ENCODE measurements at regions of chr5 and their contacts with region 1.

Region 1: GRCh38 chr5:127536687-127537086 is 19.2 kb downstream of the PRRC1 start:
- DNase-seq: no peak
- ATAC-seq: no peak
- H3K4me3 ChIP-seq: no peak overlapping the region
- H3K4me3 Mint-ChIP-seq: no peak overlapping the region
- H3K27ac ChIP-seq: no peak overlapping the region
- H3K27ac Mint-ChIP-seq: no peak overlapping the region
- H3K4me1 ChIP-seq: no peaks in the 10 kb centered on the region
- H3K4me1 Mint-ChIP-seq: peaks cover 8% of the 10 kb centered on the region
- H3K27me3 ChIP-seq: no peaks in the 10 kb centered on the region
- H3K27me3 Mint-ChIP-seq: no peaks in the 10 kb centered on the region
- CTCF ChIP-seq: peak; percentile 55

Region 2: DNA sequence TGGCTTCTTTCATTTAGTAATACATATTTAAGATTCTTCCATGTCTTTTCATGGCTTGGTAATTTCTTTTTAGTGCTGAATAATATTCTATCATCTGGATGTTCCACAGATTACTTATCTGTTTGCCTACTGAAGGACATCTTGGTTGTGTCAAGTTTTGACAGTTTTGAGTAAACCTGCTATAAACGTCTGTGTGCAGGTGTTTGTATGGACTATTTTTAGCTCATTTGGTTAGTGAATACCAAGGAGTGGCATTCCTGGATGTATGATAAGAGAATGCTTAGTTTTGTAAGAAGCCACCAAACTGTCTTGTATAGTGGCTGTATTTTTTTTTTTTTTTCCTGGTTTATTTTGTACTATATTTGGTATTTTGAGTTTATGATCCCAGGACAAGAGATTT is 19.1 kb after region 1 on chr5:
- CTCF ChIA-PET with region 1: interaction called, 4 read pairs
- POLR2A ChIA-PET with region 1: interaction called, 3 read pairs
- intact Hi-C with region 1: loop called in 1 of 2 experiments (anchors 1 kb)
- DNase-seq: no peak
- ATAC-seq: no peak
- H3K4me3 ChIP-seq: no peak overlapping the region
- H3K4me3 Mint-ChIP-seq: no peak overlapping the region
- H3K27ac ChIP-seq: no peak overlapping the region
- H3K27ac Mint-ChIP-seq: no peak overlapping the region
- H3K4me1 ChIP-seq: no peaks in the 10 kb centered on the region
- H3K4me1 Mint-ChIP-seq: no peaks in the 10 kb centered on the region
- H3K27me3 ChIP-seq: no peaks in the 10 kb centered on the region
- H3K27me3 Mint-ChIP-seq: no peaks in the 10 kb centered on the region
- CTCF ChIP-seq: no peak